ENCODE measurements at regions of chr15 and their contacts with region 1.

Region 1: DNA sequence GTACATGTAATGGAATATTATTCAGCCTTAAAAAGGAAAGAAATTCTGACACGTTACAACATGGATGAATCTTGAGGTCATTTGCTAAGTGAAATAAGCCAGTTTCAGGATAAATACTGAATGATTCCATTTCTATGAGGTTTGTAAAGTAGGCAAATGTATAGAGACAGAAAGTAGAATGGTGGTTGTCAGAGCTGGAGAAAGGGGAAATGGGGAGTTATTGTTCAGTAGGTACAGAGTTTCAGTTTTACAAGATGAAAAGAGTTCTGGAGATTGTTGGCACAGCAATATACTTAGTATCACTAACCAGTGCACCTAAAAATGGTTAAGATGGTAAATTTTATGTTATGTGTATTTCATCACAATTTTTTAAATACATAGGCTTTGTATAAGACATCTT is 60.6 kb downstream of the USP8 start:
- DNase-seq: no peak
- H3K4me3 Mint-ChIP-seq: no peak overlapping the region
- H3K27ac Mint-ChIP-seq: peak overlapping the region; percentile 72
- H3K4me1 Mint-ChIP-seq: peaks cover 28% of the 10 kb centered on the region
- H3K27me3 Mint-ChIP-seq: no peaks in the 10 kb centered on the region

Region 2: DNA sequence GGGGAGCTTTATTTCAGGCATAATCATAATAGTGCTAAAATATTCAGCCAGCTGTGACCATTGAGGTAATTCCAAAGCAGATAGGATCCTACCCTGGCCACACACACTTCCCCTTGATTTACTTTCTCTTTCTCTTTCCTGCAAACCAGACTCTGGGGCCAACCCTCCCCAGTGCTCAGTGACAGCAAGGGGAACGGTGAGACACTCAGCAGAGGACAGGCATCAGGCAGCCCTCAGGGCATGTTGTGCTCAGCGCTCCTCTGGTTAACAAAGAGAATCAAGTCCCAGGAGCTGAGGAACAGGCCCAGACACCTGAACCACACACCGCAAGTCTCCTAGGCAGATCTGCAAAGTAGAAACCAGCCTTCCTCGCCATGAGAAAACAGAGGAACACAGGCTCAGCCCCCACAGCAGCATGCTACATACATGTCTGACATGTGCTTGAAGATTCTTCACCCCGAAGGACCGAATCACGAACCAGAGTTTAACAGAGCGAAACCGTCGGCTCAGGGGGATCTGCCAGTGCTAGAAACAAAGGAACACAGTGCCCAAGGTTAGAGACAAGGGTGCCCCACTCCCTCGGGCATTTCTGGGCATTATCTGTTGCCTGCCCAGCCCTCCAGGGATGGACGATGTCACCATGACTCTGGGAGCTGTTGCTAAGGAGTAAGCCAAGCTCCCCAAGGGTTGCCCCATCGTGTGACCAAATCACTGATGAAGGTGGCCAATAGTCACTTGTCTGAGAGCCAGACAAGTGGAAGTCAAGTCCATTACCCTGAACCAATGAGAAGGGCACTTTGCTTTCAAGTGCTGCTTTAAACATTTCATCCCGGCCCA is 236.7 kb before region 1 on chr15:
- intact Hi-C with region 1: loop called (anchors 10 kb)
- DNase-seq: peak; percentile 91
- H3K4me3 Mint-ChIP-seq: peak overlapping the region; percentile 81
- H3K27ac Mint-ChIP-seq: peak overlapping the region; percentile 99
- H3K4me1 Mint-ChIP-seq: peaks cover 53% of the 10 kb centered on the region
- H3K27me3 Mint-ChIP-seq: no peaks in the 10 kb centered on the region

Region 3: GRCh38 chr15:50424066-50424890 is 60.5 kb before region 1 on chr15 and contains the start of gene USP8:
- intact Hi-C with region 1: loop called (anchors 2 kb)
- DNase-seq: peak; percentile 98
- H3K4me3 Mint-ChIP-seq: peak within 1 kb of the TSS; percentile 96
- H3K27ac Mint-ChIP-seq: peak within 1 kb of the TSS; percentile 96
- H3K4me1 Mint-ChIP-seq: peaks cover 19% of the 10 kb centered on the region
- H3K27me3 Mint-ChIP-seq: no peaks in the 10 kb centered on the region
- total RNA-seq, gene USP8: 56.9 and 60.9 TPM in 2 replicates

Region 4: GRCh38 chr15:50653156-50653745 is 168.5 kb after region 1 on chr15:
- intact Hi-C with region 1: loop called (anchors 10 kb)
- DNase-seq: no peak
- H3K4me3 Mint-ChIP-seq: no peak overlapping the region
- H3K27ac Mint-ChIP-seq: peak overlapping the region; percentile 9
- H3K4me1 Mint-ChIP-seq: peaks cover 15% of the 10 kb centered on the region
- H3K27me3 Mint-ChIP-seq: no peaks in the 10 kb centered on the region